ENCODE measurements at regions of chr14 and their contacts with region 1.

Region 1: DNA sequence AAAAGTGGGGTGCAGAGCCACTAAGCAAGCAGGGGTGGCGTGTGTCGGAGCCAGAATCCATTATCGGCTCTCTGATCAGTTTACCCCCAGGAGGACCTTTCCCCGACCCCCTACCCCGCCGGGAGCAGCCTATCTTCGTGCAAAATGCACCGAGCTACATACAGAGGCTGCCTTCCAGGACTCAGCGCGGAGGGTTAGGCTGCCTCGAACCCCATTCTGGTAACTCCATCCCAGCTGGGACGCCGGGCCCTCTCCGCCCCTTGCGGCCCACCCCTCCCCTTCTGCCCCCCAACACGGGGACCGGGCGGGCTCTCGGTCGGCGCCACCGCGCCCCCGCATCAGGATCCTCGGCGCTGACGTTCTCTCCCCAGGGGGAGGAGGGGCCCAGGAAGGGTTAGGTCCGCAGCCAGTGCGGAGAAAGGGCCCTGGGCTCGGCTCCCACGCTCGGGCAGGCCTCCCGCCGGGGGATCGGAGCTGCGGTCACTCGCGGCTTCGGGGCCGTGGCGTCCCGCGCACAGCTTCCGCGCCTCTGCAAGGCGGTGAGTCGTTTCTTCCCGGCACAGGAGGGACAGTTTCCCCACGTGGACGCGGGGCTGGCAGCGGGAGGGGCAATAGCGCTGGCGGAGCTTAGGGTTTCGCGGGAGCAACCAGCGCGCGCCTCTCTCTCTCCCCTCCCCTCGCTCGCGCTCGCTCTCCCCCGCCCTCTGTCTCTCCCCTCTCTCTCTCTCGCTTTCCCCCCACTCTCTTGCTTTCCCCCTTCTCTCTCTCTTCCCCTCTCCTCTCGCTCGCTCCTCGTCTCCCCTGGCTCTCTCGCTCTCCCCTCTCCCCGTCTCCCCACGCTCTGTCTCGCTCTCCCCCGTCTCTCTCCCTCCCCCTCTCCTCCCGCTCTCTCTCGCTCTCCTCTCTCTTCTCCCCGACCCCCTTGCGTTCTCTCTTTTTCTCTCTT is 12.5 kb upstream of the MAP3K9 start:
- DNase-seq: peak; percentile 65
- ATAC-seq: peak; percentile 69
- H3K4me3 Mint-ChIP-seq: peak overlapping the region; percentile 81
- H3K27ac Mint-ChIP-seq: no peak overlapping the region
- H3K4me1 Mint-ChIP-seq: peaks cover 37% of the 10 kb centered on the region
- H3K27me3 Mint-ChIP-seq: peaks cover 31% of the 10 kb centered on the region

Region 2: GRCh38 chr14:70622111-70622712 is 199.6 kb before region 1 on chr14:
- CTCF ChIA-PET with region 1: interaction called, 25 read pairs
- POLR2A ChIA-PET with region 1: no interaction called
- DNase-seq: peak; percentile 72
- ATAC-seq: peak; percentile 79
- H3K4me3 Mint-ChIP-seq: no peak overlapping the region
- H3K27ac Mint-ChIP-seq: no peak overlapping the region
- H3K4me1 Mint-ChIP-seq: no peaks in the 10 kb centered on the region
- H3K27me3 Mint-ChIP-seq: peaks cover 4% of the 10 kb centered on the region

Region 3: GRCh38 chr14:70803321-70804310 is 18.2 kb before region 1 on chr14:
- CTCF ChIA-PET with region 1: interaction called, 20 read pairs
- POLR2A ChIA-PET with region 1: interaction called, 11 read pairs
- DNase-seq: no peak
- ATAC-seq: no peak
- H3K4me3 Mint-ChIP-seq: no peak overlapping the region
- H3K27ac Mint-ChIP-seq: no peak overlapping the region
- H3K4me1 Mint-ChIP-seq: peaks cover 10% of the 10 kb centered on the region
- H3K27me3 Mint-ChIP-seq: peaks cover 2% of the 10 kb centered on the region

Region 4: DNA sequence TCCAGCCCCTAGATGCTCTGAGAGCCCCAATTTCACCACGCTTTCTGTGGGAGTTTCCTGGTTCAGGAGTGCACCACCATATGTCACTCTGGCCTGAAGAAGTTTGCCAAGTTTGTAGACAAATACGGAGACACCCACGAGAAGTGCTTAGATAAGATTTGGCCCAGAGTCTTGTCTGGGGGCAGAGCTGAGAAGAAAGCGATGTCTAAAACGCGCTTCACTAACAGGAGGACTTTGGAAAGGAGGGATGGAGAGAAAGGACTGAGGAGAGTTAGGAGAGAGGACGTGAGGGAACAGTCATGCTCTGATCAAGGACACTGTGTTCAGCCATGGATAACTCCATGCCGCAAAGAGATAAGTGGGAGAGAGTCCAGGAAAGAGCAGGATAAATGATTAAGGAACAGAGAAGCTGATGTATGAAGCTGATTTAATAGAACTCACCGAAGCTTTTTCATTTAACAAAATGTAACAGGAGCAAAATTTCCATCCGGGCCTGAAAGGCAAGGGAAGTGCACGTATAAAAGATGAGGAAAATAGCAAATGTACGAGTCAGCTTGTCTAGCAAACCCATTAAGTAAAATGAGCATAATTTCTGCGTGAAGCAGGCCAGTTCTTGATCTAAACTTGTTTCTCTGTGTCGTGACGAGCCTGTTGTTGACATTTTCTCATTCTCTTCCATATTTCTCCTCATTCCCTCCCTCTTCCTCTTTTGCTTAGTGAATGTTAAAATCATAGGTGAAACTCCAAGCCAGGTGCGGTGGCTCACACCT is 10.9 kb after region 1 on chr14:
- CTCF ChIA-PET with region 1: interaction called, 20 read pairs
- POLR2A ChIA-PET with region 1: interaction called, 3 read pairs
- DNase-seq: no peak
- ATAC-seq: no peak
- H3K4me3 Mint-ChIP-seq: no peak overlapping the region
- H3K27ac Mint-ChIP-seq: no peak overlapping the region
- H3K4me1 Mint-ChIP-seq: no peaks in the 10 kb centered on the region
- H3K27me3 Mint-ChIP-seq: peaks cover 2% of the 10 kb centered on the region

Region 5: GRCh38 chr14:70962935-70963334 is 141.1 kb after region 1 on chr14:
- CTCF ChIA-PET with region 1: interaction called, 19 read pairs
- POLR2A ChIA-PET with region 1: no interaction called
- DNase-seq: no peak
- ATAC-seq: no peak
- H3K4me3 Mint-ChIP-seq: no peak overlapping the region
- H3K27ac Mint-ChIP-seq: no peak overlapping the region
- H3K4me1 Mint-ChIP-seq: peaks cover 5% of the 10 kb centered on the region
- H3K27me3 Mint-ChIP-seq: no peaks in the 10 kb centered on the region

Region 6: GRCh38 chr14:70995676-70996075 is 173.8 kb after region 1 on chr14:
- CTCF ChIA-PET with region 1: interaction called, 11 read pairs
- POLR2A ChIA-PET with region 1: no interaction called
- DNase-seq: no peak
- ATAC-seq: no peak
- H3K4me3 Mint-ChIP-seq: no peak overlapping the region
- H3K27ac Mint-ChIP-seq: no peak overlapping the region
- H3K4me1 Mint-ChIP-seq: peaks cover 36% of the 10 kb centered on the region
- H3K27me3 Mint-ChIP-seq: no peaks in the 10 kb centered on the region

Measured in activated CD8-positive, alpha-beta T cell treated with anti-CD3 and anti-CD28 coated beads, Interleukin-2, amount 10 ng/mL, durations not matched to agents 7 days and 5 days (primary cell).